ENCODE measurements at regions of chr13 and their contacts with region 1.

Region 1: GRCh38 chr13:79680485-79680884 is 199.5 kb downstream of the NDFIP2 start:
- DNase-seq: no peak
- H3K27ac ChIP-seq: no peak overlapping the region
- CTCF ChIP-seq: no peak

Region 2: GRCh38 chr13:79847882-79848592 is 167.6 kb after region 1 on chr13:
- CTCF ChIA-PET with region 1: interaction called, 12 read pairs
- POLR2A ChIA-PET with region 1: no interaction called
- DNase-seq: no peak
- H3K27ac ChIP-seq: no peak overlapping the region
- CTCF ChIP-seq: no peak

Region 3: GRCh38 chr13:79869326-79869725 is 188.8 kb after region 1 on chr13:
- CTCF ChIA-PET with region 1: no interaction called
- POLR2A ChIA-PET with region 1: no interaction called
- DNase-seq: no peak
- H3K27ac ChIP-seq: no peak overlapping the region
- CTCF ChIP-seq: no peak